Aorta (tissue), 5 donors: ENCODE measurements at regions of chr6 and their contacts with region 1.

Region 1: DNA sequence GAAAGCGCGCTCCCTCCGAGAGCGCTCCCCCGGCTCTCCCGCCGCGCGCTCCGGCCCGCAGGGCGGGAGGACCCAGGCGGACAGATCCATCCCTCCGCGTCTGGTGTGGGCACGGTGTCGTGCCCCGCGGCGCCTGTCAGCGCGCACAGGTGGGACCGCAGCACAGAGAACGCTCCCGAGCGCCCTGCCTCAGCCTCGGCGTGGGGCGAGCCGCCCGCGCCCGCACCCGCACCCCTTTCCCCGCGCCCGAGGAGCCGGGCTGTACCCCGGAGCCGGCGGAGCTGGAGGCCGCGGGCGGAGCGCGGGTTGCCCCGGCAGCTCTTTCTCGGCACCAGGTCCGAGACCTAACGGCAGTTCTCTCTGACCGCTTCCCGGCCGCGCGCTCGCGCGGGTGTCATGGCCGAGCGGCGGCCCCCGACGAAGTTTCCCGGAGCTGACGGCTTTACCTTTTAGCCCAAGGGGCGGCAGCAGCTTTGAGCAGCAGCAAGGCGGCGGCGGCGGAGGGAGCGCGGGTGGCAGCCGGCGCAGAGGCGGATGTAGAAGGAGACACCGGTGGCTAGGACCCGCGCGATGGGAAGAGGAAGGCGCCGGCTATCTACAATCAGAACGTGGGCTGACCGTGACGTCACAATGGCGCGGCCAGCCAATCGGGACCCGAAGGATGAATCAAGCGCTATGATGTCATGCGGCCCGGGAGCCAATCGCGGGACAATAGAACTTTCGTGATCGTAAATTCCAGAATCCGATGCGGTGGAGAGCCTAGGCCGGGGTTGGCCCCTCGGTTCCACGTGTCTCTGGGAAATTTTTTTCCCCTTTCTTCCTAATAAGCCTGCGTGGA is at the start of gene ELOVL5:
- DNase-seq: peak; percentile 99 to 100
- ATAC-seq: peak; percentile 96
- H3K4me3 ChIP-seq: peak within 1 kb of the TSS; percentile 87 to 88
- H3K27ac ChIP-seq: peak within 1 kb of the TSS; percentile 94 to 95
- H3K4me1 ChIP-seq: no peaks in the 10 kb centered on the region
- H3K27me3 ChIP-seq: no peaks in the 10 kb centered on the region
- total RNA-seq, gene ELOVL5: 62.0 to 75.5 TPM

Region 2: DNA sequence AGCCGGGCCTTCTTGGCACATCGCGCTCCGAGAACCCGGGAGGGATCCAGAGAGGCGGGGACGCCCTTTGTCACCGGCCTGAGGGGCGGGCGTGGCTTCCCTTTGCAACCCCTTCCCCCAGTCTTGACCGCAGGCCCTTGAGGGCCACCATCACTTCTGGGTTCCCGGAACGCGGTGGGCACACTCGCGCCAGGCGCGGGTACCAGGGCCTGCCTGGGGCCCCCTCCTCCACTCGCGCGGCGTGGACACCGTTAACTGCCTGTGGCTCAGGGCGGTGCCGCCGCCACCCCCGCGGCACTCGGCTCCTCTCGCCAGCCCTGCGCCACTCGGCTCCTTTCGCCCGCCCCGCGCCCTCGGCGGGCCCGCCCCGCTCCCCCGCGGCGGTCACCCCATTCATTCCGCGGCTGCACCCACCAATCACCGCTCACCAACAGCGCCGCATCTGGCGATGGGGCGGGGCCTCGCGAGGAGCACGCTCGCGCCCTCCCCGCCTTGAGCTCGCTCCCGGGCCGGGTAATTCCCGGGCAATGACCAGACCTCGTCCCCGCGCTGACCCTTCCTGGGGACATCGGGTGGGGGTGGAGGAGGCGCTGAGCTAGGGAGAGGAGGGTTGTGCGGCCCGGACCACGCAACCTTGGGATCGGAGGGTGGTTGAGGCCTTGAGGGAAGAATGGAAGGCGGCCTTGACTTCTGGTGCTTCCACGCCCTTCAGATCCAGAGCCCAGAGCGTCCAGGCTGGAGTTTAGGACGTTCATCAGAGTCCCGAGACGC is 10.7 kb after region 1 on chr6:
- intact Hi-C with region 1: loop called in 1 of 2 experiments (anchors 1 kb)
- DNase-seq: peak; percentile 97 to 98
- ATAC-seq: peak; percentile 99
- H3K4me3 ChIP-seq: peak overlapping the region; percentile 24 to 50
- H3K27ac ChIP-seq: peak overlapping the region; percentile 47 to 71
- H3K4me1 ChIP-seq: no peaks in the 10 kb centered on the region
- H3K27me3 ChIP-seq: no peaks in the 10 kb centered on the region

Region 3: GRCh38 chr6:53391170-53391569 is 42.6 kb after region 1 on chr6:
- intact Hi-C with region 1: no loop called
- DNase-seq: no peak
- ATAC-seq: no peak
- H3K4me3 ChIP-seq: no peak overlapping the region
- H3K27ac ChIP-seq: no peak overlapping the region
- H3K4me1 ChIP-seq: no peaks in the 10 kb centered on the region
- H3K27me3 ChIP-seq: no peaks in the 10 kb centered on the region

Region 4: GRCh38 chr6:53484476-53485280 is 136.1 kb after region 1 on chr6:
- intact Hi-C with region 1: no loop called
- DNase-seq: peak in 1 of 2 donors; percentile 54
- ATAC-seq: peak; percentile 89
- H3K4me3 ChIP-seq: no peak overlapping the region
- H3K27ac ChIP-seq: no peak overlapping the region
- H3K4me1 ChIP-seq: no peaks in the 10 kb centered on the region
- H3K27me3 ChIP-seq: peaks cover 0 to 2% of the 10 kb centered on the region in 2 donors